Activated CD4-positive, alpha-beta memory T cell treated with anti-CD3 and anti-CD28 coated beads, Interleukin-2, amount 10 ng/mL, durations not matched to agents 7 days and 5 days (primary cell): ENCODE measurements at regions of chr21 and their contacts with region 1.

Region 1: DNA sequence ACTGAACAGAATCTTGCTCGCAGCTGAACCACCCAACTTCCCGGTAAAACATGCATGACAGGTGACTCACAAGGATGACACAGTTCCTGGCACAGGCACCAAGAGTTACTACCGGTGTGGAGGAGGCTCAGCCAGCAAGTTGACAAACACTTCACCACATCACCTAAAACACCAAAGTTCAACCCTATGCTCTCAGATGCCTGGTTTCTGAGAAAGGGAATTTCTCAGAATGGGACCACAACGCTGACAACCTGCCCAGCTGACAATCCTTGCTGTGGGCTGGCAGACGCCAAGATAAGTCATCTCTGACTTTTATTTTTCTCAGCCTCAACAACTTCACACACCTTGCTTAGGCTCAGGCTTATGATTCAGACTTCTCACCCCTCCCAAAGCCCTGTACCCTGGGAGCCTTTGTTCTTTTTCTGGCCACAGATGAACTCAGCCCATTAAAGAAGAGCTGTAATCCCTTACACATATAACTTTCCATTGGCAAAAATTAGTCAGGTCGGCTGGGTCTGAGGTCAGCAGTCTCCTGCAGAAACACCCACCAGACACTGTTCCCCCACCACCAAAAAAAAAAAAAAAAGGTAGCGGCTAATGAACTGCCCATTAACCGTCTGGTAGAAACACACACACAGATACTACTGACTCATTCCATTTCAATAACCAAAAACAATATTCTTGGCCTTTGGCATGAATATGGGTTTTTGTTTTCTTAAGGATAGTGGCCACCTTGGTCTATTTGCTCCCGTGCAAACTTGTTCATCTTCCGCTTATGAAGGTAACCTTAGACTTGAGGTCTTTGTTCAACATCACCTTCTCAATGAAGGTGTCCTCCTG is 10.8 kb upstream of the TIAM1 start:
- DNase-seq: peak; percentile 88
- H3K4me3 Mint-ChIP-seq: peak overlapping the region; percentile 44
- H3K27ac Mint-ChIP-seq: peak overlapping the region; percentile 84
- H3K4me1 Mint-ChIP-seq: peaks cover 57% of the 10 kb centered on the region
- H3K27me3 Mint-ChIP-seq: no peaks in the 10 kb centered on the region

Region 2: DNA sequence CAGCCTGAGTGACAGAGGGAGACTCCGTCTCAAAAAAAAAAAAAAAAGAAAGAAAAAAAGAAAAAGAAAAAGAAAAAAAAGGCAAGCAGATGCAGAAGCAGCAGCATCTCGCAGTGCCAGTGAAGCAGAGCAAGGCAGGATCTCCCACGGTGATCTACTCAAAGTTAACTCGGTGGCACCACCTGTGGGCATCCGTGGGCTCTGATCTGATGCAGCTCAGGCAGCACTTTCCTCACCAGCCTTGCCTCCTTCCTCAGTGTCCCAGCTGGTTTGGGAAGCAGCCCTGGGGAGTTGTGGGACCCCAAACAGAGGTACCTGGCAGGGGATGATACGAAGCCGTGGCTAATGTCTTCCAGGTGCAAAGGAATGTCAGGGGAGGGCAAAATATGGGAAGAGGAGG is 212.2 kb before region 1 on chr21:
- CTCF ChIA-PET with region 1: no interaction called
- POLR2A ChIA-PET with region 1: no interaction called
- DNase-seq: no peak
- H3K4me3 Mint-ChIP-seq: no peak overlapping the region
- H3K27ac Mint-ChIP-seq: no peak overlapping the region
- H3K4me1 Mint-ChIP-seq: peaks cover 20% of the 10 kb centered on the region
- H3K27me3 Mint-ChIP-seq: no peaks in the 10 kb centered on the region

Region 3: DNA sequence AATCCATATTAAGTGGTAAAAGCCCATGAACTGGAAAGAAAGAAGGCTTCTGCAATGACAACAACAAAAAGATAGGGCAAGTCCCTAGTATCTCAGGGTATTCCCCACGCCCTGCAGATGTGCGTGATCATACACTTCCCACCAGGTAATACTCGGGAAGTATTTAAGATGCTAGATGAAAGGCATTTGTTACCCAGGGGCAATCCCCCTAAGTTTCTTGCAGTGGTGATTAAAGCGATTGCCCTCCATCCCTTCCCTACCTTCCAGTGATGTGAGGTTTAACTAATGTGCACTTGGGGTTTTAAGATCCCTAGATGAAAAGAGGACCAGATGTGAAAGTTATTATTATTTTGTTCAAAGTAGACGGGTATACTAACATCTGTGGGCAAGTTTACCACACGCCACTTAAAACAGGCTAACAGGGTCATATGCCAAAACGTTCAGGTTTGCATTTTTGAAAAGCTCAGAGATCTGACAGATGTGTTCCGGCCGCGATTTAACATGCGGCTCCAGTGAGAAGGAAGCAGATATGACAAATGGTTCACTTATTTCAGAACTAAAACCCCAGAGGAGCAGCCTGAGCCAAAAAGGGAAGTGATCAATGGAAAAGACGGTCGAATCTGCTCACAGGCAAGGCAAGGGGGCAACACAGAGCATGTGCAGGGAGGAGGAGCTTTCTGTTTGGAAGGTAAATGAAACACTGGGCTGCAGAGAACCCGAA is 28.1 kb before region 1 on chr21:
- CTCF ChIA-PET with region 1: no interaction called
- POLR2A ChIA-PET with region 1: interaction called, 10 read pairs
- DNase-seq: peak; percentile 49
- H3K4me3 Mint-ChIP-seq: peak overlapping the region; percentile 55
- H3K27ac Mint-ChIP-seq: peak overlapping the region; percentile 75
- H3K4me1 Mint-ChIP-seq: peaks cover 25% of the 10 kb centered on the region
- H3K27me3 Mint-ChIP-seq: no peaks in the 10 kb centered on the region

Region 4: DNA sequence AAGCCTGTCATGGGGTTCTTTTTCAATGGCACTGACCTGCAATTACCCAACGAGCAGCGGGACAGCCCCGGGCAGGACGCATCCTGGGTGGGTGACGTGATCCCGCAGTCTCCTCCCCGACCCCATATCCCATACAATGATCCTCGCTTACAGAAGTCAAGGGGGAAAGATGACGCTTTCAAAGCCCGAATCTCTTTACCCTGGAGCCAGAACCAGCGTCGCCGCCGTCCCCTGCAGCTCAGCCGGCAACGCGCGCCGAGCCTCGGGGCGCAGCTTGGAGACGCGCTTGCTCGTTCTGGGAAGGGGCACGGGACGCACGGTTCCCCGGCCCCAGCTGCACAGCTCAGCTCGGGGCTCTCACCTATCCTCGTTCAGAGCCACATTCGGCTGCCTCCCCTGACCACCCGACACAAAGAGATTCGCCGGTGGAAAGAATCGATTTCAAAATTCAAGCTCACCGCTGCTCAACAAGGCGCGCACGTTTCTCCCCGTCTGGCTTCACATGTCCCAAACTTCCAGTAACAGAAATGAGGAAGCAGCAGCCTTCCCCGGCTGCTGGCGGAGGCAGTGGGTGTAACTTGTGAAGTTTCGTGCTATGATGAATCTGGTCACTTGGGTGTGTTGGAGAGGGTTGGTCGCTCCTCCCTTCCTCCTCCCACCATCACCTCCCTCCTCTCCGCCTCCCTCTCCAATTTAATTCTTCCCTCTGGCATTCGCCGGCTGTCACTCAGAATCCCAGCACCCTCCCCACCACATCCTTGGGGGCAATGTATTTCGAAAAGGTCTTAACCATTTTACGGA is 10.9 kb before region 1 on chr21 and contains the start of gene TIAM1:
- CTCF ChIA-PET with region 1: interaction called, 3 read pairs
- POLR2A ChIA-PET with region 1: interaction called, 26 read pairs
- DNase-seq: peak; percentile 31
- H3K4me3 Mint-ChIP-seq: peak within 1 kb of the TSS; percentile 91
- H3K27ac Mint-ChIP-seq: peak within 1 kb of the TSS; percentile 56
- H3K4me1 Mint-ChIP-seq: peaks cover 57% of the 10 kb centered on the region
- H3K27me3 Mint-ChIP-seq: peaks cover 35% of the 10 kb centered on the region
- total RNA-seq, gene TIAM1: 57.6 to 60.6 TPM

Region 5: DNA sequence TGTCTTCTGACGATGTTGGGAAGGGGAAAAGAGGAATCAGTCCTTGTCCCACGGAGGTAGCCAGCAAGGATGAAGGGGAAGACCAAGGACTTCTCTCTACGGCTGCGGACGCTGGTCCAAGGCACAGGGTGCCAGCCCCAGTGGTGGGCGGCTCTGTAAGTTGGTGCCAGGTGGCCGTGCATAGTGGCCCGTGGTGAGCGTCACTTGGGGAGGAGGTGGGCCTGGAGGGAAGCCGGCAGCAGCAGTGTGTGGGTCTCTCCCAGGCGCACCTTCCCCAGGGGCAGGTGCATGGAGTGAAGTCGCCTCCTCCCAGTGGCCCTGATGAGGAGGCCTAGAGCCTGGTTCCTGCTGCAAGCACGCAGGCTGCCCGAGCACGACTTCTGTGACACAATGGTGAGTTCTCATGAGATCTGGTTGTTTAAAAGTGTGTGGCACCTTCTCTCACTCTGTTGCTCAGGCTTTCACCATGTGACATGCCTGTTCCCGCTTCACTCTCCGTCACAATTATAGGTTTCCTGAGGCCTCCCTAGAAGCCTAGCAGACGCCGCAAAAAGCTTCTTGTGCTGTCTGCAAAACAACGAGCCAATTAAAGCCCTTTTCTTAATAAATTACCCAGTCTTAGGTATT is 32.8 kb after region 1 on chr21:
- CTCF ChIA-PET with region 1: no interaction called
- POLR2A ChIA-PET with region 1: no interaction called
- DNase-seq: no peak
- H3K4me3 Mint-ChIP-seq: no peak overlapping the region
- H3K27ac Mint-ChIP-seq: no peak overlapping the region
- H3K4me1 Mint-ChIP-seq: no peaks in the 10 kb centered on the region
- H3K27me3 Mint-ChIP-seq: peaks cover 2% of the 10 kb centered on the region